A549 (cell line): ENCODE measurements at regions of chr2 and their contacts with region 1.

Region 1: DNA sequence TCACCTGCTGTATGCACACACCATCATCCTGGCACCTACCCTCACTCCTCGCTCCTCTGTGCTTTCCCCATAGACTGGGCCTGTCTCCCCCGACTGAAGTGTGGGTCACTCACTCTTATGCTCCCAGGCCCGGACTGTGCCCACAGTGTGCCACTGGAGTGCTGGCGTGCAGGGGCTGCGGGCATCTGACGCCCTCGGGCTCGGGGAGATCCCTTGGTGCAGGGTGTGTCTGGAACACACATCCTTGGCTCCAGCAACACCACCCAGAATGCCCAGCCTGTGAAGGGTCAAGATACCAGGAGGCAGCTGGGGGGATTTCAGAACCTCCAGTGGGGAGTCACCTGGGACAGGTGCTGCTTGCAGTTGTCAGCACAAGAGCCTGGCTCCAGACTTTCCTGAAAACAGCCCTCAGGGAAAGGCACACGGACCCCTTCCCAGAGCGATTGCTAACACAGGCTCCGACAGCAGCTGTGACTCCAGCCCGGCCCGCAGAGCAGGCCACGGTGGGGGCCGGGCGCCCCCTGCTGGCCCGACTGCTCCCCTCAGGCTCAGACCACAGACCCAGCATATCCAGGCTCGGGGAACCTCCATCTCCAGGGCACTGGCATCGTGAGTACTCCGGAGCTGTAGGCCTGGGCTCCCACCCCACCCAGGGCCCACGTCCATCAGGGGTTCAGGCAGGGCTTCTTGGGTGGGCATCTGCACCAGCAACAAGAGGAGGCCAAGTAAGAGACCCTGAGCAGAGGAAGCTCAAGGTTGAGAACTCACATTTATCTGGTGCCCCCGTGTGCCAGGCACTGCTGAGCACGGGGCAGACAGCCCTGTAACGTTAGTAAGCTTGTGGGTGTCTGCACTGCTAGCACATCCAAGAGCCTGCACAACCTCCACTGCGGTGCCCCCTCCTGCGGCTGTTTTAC is 8.6 kb downstream of the HS1BP3 start:
- DNase-seq: peak; percentile 69 to 95
- ATAC-seq: peak; percentile 89 to 99
- H3K4me3 ChIP-seq: no peak overlapping the region
- H3K27ac ChIP-seq: peak overlapping the region in 1 of 2 experiments; percentile 49; a peak in 4 of 6 replicates
- H3K4me1 ChIP-seq: peaks cover 11% of the 10 kb centered on the region; the same call in 2 of the 3 replicates
- CTCF ChIP-seq: peak; percentile 96
- EP300 ChIP-seq: no peak
- POLR2A ChIP-seq: no peak
- RAD21 ChIP-seq: peak; percentile 96

Region 2: GRCh38 chr2:20326163-20326780 is 316.0 kb before region 1 on chr2:
- CTCF ChIA-PET with region 1: interaction called, 12 read pairs
- POLR2A ChIA-PET with region 1: no interaction called
- DNase-seq: peak; percentile 50 to 66
- ATAC-seq: peak; percentile 97 to 98
- H3K4me3 ChIP-seq: no peak overlapping the region
- H3K27ac ChIP-seq: no peak overlapping the region
- H3K4me1 ChIP-seq: peaks cover 21% of the 10 kb centered on the region
- CTCF ChIP-seq: peak; percentile 95
- EP300 ChIP-seq: no peak
- POLR2A ChIP-seq: no peak
- RAD21 ChIP-seq: peak; percentile 69

Region 3: DNA sequence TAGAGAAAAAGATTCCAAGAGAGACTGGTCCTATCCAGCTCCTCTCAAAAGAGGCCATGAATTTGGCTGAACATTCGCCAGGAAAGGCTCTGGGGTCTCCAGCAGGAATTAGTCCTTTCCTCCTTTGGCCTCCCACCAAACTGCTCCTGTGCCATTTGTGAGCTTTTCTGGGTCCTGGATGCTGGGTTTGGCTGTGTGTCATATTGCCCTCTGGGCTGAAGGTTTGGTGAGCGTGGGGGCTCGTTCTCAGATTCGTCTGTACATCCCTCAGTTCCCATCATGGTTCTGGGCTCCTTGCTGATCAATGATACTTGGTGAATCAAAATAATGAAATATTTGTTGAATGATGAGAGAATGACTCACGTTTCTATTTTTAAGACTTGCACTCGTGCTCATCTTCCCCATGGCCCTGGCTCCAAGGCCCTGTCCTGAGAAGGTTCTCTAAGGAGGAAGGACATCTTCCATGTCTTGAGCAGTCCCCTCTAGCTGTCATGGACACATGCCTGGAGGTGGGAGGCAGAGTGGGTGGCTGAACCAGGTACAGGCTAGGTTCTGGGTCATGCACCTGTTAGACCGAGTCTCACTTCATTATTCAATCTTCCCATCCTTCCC is 243.3 kb before region 1 on chr2:
- CTCF ChIA-PET with region 1: interaction called, 355 read pairs
- POLR2A ChIA-PET with region 1: no interaction called
- DNase-seq: no peak
- ATAC-seq: no peak
- H3K4me3 ChIP-seq: no peak overlapping the region
- H3K27ac ChIP-seq: no peak overlapping the region
- H3K4me1 ChIP-seq: no peaks in the 10 kb centered on the region
- CTCF ChIP-seq: no peak
- EP300 ChIP-seq: no peak
- POLR2A ChIP-seq: no peak
- RAD21 ChIP-seq: no peak

Region 4: GRCh38 chr2:20438334-20439192 is 203.8 kb before region 1 on chr2:
- CTCF ChIA-PET with region 1: interaction called, 210 read pairs
- POLR2A ChIA-PET with region 1: interaction called, 3 read pairs
- DNase-seq: peak; percentile 78 to 91
- ATAC-seq: peak; percentile 80 to 86
- H3K4me3 ChIP-seq: peak overlapping the region; percentile 35
- H3K27ac ChIP-seq: peak overlapping the region; percentile 79 to 87
- H3K4me1 ChIP-seq: peaks cover 38% of the 10 kb centered on the region
- CTCF ChIP-seq: no peak
- EP300 ChIP-seq: peak; percentile 76 to 88; a peak in 2 of 5 replicates
- POLR2A ChIP-seq: no peak
- RAD21 ChIP-seq: no peak

Region 5: DNA sequence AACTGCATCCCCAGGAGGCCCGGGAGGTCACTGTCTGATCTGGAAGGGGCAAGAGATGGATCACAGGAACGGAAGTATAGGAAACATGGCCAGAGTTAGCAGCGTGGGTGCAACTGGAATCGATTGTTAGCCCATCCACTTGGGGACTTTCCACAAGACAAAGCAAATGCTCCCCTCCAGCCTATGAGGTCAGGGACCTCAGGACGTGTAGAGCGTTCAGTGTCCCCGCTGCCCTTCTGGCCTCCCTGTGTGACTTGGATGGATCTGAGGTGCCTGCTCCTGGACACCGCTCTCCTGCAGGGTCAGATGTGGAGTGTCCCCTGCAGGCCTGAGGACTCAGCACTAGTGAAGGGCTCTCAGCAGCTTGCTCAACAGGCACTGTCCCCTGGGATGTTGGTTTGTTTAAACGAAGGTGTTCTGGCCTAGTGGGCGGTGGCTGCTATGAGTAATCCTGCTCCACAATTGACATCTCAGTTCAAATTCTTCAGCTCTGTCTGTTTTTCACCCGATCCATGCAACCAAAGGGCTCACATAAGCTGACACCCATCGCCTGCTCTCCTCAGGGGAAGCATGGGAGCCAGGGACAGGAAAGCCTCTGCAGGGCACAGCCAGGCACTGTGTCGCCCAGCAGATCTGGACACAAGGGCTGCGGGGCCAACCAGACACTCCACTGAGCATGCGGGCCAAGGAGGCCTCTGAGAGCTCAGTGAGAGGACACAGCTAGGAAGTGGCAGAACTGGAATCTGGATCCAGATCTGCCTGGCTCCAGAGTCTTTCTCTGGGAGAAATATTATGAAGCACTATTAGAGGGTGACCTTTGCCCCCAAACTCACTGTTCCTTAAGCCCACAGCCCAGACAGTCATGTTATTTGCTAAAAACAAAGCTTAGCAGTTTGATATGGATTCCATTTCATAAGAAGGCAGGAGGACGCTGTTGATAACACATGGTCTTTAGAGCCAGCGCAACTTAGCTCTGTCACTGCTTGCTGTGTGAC is 117.0 kb before region 1 on chr2:
- CTCF ChIA-PET with region 1: interaction called, 12 read pairs
- POLR2A ChIA-PET with region 1: no interaction called
- DNase-seq: peak in 1 of 2 experiments; percentile 55
- ATAC-seq: peak; percentile 72 to 79
- H3K4me3 ChIP-seq: no peak overlapping the region
- H3K27ac ChIP-seq: peak overlapping the region; percentile 50 to 57; a peak in 4 of 6 replicates
- H3K4me1 ChIP-seq: peaks cover 19% of the 10 kb centered on the region
- CTCF ChIP-seq: no peak
- EP300 ChIP-seq: no peak
- POLR2A ChIP-seq: no peak
- RAD21 ChIP-seq: no peak

Region 6: DNA sequence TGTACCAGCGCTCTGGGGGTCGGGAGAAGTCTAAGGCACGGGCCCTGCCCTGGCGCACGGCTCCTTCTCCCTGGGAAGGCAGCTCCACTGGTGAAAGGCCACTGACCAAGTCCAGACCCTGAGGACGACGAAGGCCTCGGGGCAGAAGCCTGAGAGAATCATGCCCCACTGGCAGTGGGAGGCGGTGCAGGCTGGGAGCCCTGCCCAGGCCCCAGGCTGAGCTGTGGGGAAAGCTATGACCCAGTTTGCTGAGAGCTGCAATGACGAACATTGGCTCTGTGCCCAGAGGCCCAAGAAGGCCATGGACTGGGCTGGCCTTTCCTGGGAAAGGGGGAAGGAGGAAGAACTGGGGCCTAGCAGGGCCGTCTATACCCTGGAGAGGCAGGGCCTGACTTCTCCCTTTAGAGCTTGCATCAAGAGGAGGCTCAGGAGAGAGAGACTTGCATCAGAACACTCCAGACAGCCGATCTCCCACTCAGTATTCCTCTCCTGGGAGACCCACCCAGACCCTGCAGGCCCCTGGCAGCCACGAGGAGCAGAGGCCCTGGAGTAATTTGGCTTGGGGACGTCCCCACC is 24.3 kb before region 1 on chr2:
- CTCF ChIA-PET with region 1: interaction called, 27 read pairs
- POLR2A ChIA-PET with region 1: no interaction called
- DNase-seq: peak; percentile 90 to 95
- ATAC-seq: peak; percentile 87 to 94
- H3K4me3 ChIP-seq: no peak overlapping the region
- H3K27ac ChIP-seq: peak overlapping the region; percentile 89 to 90
- H3K4me1 ChIP-seq: peaks cover 26% of the 10 kb centered on the region
- CTCF ChIP-seq: no peak
- EP300 ChIP-seq: no peak; a peak in 1 of 5 replicates
- POLR2A ChIP-seq: peak; percentile 24; the same call in 1 of the 2 replicates
- RAD21 ChIP-seq: peak; percentile 21 to 30; a peak in 3 of 5 replicates